BJ (cell line): ENCODE measurements at regions of chr5 and their contacts with region 1.

Region 1: GRCh38 chr5:113513384-113514288 is at the start of gene YTHDC2:
- DNase-seq: peak; percentile 24
- H3K4me3 ChIP-seq: peak within 1 kb of the TSS; percentile 74
- H3K27me3 ChIP-seq: no peaks in the 10 kb centered on the region
- CTCF ChIP-seq: peak; percentile 26; the same call in 1 of the 2 replicates
- polyA plus RNA-seq, gene YTHDC2: 2.5 and 6.9 TPM in 2 replicates

Region 2: DNA sequence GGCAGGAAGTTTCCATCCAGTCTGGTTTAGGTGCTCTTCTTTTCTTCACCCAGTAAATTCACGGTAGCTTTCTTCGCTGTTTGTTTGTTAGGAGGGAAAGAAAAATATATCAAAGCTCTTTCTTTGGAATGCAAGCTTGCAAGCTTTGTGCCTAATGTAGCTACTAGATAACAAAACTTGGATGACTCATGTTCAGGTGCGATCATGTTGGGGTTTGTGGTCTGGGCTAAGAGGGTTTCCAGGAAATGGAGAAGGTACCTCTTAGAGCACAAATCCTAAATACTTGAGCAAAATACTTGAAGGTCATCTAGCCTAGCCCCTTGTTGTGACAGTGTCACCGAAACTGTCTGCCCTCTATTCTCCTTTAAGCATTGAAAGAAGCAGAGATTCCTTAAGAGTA is 634.9 kb before region 1 on chr5:
- CTCF ChIA-PET with region 1: no interaction called
- POLR2A ChIA-PET with region 1: no interaction called
- DNase-seq: no peak
- H3K4me3 ChIP-seq: no peak overlapping the region
- H3K27me3 ChIP-seq: no peaks in the 10 kb centered on the region
- CTCF ChIP-seq: no peak

Region 3: GRCh38 chr5:112995764-112996618 is 517.6 kb before region 1 on chr5:
- CTCF ChIA-PET with region 1: interaction called, 26 read pairs
- POLR2A ChIA-PET with region 1: no interaction called
- DNase-seq: no peak
- H3K4me3 ChIP-seq: no peak overlapping the region
- H3K27me3 ChIP-seq: no peaks in the 10 kb centered on the region
- CTCF ChIP-seq: peak; percentile 82

Region 4: GRCh38 chr5:113336975-113337374 is 176.7 kb before region 1 on chr5:
- CTCF ChIA-PET with region 1: interaction called, 11 read pairs
- POLR2A ChIA-PET with region 1: no interaction called
- DNase-seq: no peak
- H3K4me3 ChIP-seq: no peak overlapping the region
- H3K27me3 ChIP-seq: no peaks in the 10 kb centered on the region
- CTCF ChIP-seq: peak; percentile 48

Region 5: GRCh38 chr5:113378959-113379541 is 134.6 kb before region 1 on chr5:
- CTCF ChIA-PET with region 1: interaction called, 60 read pairs
- POLR2A ChIA-PET with region 1: no interaction called
- DNase-seq: no peak
- H3K4me3 ChIP-seq: no peak overlapping the region
- H3K27me3 ChIP-seq: no peaks in the 10 kb centered on the region
- CTCF ChIP-seq: peak; percentile 76